ENCODE measurements at regions of chr18 and their contacts with region 1.

Region 1: GRCh38 chr18:6885992-6886796 is 156.7 kb downstream of the ARHGAP28 start:
- DNase-seq: peak; percentile 72
- H3K4me3 ChIP-seq: no peak overlapping the region
- H3K27ac ChIP-seq: no peak overlapping the region
- H3K4me1 ChIP-seq: no peaks in the 10 kb centered on the region
- H3K27me3 ChIP-seq: peaks cover 45% of the 10 kb centered on the region

Region 2: DNA sequence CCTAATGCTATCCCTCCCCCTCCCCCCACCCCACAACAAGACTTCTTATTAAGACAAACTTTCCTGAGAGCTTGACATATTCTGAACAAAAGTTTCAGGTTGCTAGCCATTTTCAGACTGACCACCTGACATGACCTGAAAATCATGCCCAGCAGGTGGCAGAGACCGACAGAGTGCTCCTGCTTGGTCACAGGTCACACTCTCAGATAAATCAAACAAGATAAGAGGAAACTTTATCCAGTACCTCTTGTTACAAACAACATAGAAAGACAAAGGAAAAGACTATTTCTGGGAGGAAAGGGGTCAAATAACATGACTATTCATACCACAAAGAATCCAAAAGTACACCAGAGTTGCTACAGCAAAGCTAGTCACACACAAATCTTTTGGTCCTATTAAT is 1098.3 kb before region 1 on chr18:
- in situ Hi-C with region 1: no loop called
- DNase-seq: no peak
- H3K4me3 ChIP-seq: no peak overlapping the region
- H3K27ac ChIP-seq: no peak overlapping the region
- H3K4me1 ChIP-seq: no peaks in the 10 kb centered on the region
- H3K27me3 ChIP-seq: no peaks in the 10 kb centered on the region

Region 3: GRCh38 chr18:5890331-5891183 is 995.6 kb before region 1 on chr18:
- in situ Hi-C with region 1: loop called (anchors 25 kb)
- DNase-seq: no peak
- H3K4me3 ChIP-seq: no peak overlapping the region
- H3K27ac ChIP-seq: no peak overlapping the region
- H3K4me1 ChIP-seq: no peaks in the 10 kb centered on the region
- H3K27me3 ChIP-seq: peaks cover 49% of the 10 kb centered on the region

Region 4: GRCh38 chr18:6509832-6510231 is 376.4 kb before region 1 on chr18:
- in situ Hi-C with region 1: no loop called
- DNase-seq: no peak
- H3K4me3 ChIP-seq: no peak overlapping the region
- H3K27ac ChIP-seq: no peak overlapping the region
- H3K4me1 ChIP-seq: no peaks in the 10 kb centered on the region
- H3K27me3 ChIP-seq: no peaks in the 10 kb centered on the region

Region 5: DNA sequence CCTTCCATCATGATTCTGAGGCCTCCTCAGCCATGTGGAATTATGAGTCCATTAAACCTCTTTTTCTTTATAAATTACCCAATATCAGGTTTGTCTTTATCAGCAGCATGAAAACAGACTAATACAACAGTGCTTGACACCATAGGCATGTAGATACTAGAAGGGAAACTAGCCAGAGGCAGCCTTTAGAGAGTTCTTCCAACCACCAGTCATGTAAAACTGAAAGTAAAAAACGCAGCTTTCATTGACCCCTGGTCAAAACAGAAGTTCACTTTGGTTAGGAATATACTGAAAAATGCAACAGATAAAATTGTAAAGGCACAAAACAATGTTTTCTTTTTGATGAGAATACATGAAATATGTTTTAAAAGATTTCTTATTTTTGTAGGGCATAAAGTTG is 348.7 kb before region 1 on chr18:
- in situ Hi-C with region 1: loop called (anchors 10 kb)
- DNase-seq: no peak
- H3K4me3 ChIP-seq: no peak overlapping the region
- H3K27ac ChIP-seq: no peak overlapping the region
- H3K4me1 ChIP-seq: no peaks in the 10 kb centered on the region
- H3K27me3 ChIP-seq: no peaks in the 10 kb centered on the region

Region 6: DNA sequence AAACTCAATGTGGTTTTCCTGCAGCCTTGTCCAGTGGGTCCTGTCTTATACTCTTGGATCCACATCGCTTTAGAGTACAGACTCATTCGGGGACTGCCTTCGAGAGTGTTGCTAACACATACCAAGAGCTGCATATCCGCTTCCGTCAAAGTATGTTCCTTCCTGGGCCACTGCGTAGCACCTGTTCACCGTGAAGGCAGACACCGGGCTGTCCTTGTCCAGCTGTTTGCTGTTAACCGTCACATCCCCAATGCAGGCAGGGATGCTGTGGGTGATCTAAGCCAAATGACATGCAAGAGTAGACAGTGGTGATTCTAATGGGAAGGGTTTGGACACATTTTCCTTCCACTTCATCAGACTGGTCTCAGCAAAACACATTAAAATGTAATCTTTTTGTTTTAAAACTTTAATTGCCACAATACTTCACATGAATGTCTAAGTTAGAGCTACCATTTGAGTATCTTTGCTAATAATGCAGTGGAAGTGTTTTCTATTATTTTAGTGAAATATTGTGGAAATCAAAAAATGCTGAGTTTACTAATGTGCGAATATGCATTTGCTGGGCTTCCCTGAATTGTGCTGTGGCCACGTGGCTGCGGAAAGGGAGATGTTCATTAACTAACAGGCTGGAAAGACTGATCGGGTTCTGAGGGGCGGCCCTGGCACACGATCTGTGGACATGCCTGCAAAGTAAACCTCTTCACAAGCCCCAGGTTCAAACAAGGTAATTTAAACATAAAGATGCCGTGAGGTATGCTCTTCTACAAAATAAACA is 62.3 kb after region 1 on chr18:
- in situ Hi-C with region 1: no loop called
- DNase-seq: no peak
- H3K4me3 ChIP-seq: no peak overlapping the region
- H3K27ac ChIP-seq: no peak overlapping the region
- H3K4me1 ChIP-seq: no peaks in the 10 kb centered on the region
- H3K27me3 ChIP-seq: no peaks in the 10 kb centered on the region

Measured in GM23248 (cell line).